Sigmoid colon (tissue), 7 donors: ENCODE measurements at regions of chr2 and their contacts with region 1.

Region 1: DNA sequence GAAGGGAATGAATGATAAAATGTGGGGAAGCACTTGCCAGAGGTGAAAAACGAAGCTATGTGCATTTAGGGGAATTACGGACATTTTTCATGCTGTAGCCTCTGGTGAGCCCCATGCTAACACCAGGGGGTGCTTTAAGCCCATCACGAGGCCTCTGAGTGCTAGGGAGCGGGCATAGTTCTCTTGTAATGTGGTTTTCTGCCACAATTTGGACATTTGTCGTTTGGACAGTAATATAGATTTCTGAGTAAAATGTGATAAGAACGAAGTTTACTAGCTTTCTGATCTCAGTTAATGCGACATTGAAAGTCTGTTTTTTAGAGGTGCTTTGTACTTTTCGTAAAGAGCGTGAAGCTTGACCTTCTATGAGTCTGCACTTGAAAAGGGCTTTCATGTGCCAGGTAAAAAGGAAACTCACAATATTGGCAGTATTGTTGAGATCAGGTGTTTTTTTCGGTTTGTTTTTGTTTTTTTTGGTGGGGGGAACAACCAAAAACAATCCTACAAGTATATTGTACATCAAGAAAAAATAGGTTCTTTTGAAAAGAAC is 50.6 kb downstream of the TRAF3IP1 start:
- DNase-seq: peak; percentile 78
- H3K4me3 ChIP-seq: no peak overlapping the region
- H3K27ac ChIP-seq: no peak overlapping the region
- H3K4me1 ChIP-seq: peaks cover 0 to 13% (median 2%) of the 10 kb centered on the region in 4 donors
- H3K27me3 ChIP-seq: no peaks in the 10 kb centered on the region
- CTCF ChIP-seq: peak; percentile 65 to 77 (median 72)
- EP300 ChIP-seq: no peak
- POLR2A ChIP-seq: no peak

Region 2: GRCh38 chr2:238462782-238463396 is 92.0 kb after region 1 on chr2:
- intact Hi-C with region 1: loop called (anchors 5 kb)
- DNase-seq: no peak
- H3K4me3 ChIP-seq: no peak overlapping the region
- H3K27ac ChIP-seq: no peak overlapping the region
- H3K4me1 ChIP-seq: peaks cover 0 to 21% (median 15%) of the 10 kb centered on the region in 4 donors
- H3K27me3 ChIP-seq: no peaks in the 10 kb centered on the region
- CTCF ChIP-seq: peak in 3 of 4 experiments; percentile 55 to 67 (median 67)
- EP300 ChIP-seq: no peak
- POLR2A ChIP-seq: no peak